GM12878 (cell line): ENCODE measurements at regions of chr1 and their contacts with region 1.

Region 1: GRCh38 chr1:11248155-11248554 is 14.2 kb downstream of the MTOR start:
- DNase-seq: no peak
- ATAC-seq: no peak
- H3K4me3 ChIP-seq: no peak overlapping the region
- H3K27ac ChIP-seq: no peak overlapping the region
- H3K4me1 ChIP-seq: no peaks in the 10 kb centered on the region
- H3K27me3 ChIP-seq: no peaks in the 10 kb centered on the region
- CTCF ChIP-seq: 0 out of 6 replicates have a peak, but pooled peaks of 1 of the 3 experiments have one; percentile 11
- EP300 ChIP-seq: no peak
- POLR2A ChIP-seq: no peak
- RAD21 ChIP-seq: no peak

Region 2: DNA sequence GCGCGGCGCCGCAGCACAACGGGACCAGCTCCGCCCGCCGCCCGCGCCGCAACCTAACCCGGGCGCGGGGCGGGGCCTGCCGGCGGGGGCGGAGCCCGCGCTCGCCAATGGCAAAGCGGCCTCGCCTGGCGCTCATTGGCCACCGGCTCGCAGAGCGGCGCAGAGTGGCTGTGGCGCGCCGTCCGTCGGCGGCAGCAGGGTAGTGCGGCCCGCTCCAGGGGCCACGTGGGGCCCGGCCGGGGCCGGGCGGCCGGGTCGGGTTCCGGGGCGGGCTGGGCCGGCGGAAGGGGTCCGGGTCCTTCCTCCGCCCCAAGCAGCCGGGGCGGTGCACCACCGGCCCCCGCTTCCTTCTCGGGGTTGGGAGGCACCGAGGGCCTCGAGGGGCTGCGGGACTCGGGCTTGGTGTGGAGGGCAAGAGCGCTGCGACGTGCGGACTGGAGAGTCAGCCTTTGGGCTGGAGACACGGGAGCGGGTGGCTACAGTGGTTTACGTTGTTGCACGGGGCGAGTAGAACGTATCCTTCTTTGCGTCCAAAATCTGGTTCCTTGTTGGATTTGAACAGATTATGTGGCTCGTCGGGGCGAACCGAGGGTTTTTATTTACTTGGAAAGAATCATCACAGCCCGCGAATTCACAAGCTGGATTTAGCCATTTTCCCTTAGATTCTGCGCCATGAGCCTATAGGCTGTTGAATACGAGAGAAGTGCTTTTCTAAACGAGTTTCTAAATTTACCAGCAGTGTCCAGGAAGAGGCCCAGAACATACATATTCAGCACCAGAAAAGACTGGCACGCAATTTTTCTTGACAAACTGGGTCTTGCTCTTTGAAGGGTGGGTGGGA is 187.9 kb before region 1 on chr1 and contains the start of gene SRM:
- CTCF ChIA-PET with region 1: interaction called, 10 read pairs
- POLR2A ChIA-PET with region 1: no interaction called
- RAD21 ChIA-PET with region 1: no interaction called
- SMC1A ChIA-PET with region 1: no interaction called
- in situ Hi-C with region 1: no loop called
- intact Hi-C with region 1: no loop called
- DNase-seq: peak; percentile 40
- ATAC-seq: peak; percentile 94
- H3K4me3 ChIP-seq: peak within 1 kb of the TSS; percentile 95
- H3K27ac ChIP-seq: peak within 1 kb of the TSS; percentile 85
- H3K4me1 ChIP-seq: peaks cover 26% of the 10 kb centered on the region
- H3K27me3 ChIP-seq: no peaks in the 10 kb centered on the region
- CTCF ChIP-seq: peak in 2 of 3 experiments; percentile 13 to 41; a peak in 1 of 6 replicates
- EP300 ChIP-seq: no peak
- POLR2A ChIP-seq: peak; percentile 82
- RAD21 ChIP-seq: no peak
- polyA plus RNA-seq, gene SRM: 16.7 to 46.6 TPM

Region 3: GRCh38 chr1:11364170-11364569 is 116.0 kb after region 1 on chr1:
- CTCF ChIA-PET with region 1: interaction called, 20 read pairs
- POLR2A ChIA-PET with region 1: no interaction called
- RAD21 ChIA-PET with region 1: no interaction called
- SMC1A ChIA-PET with region 1: no interaction called
- in situ Hi-C with region 1: no loop called
- intact Hi-C with region 1: no loop called
- DNase-seq: no peak
- ATAC-seq: peak; percentile 41; the same call in 1 of the 3 replicates
- H3K4me3 ChIP-seq: no peak overlapping the region
- H3K27ac ChIP-seq: no peak overlapping the region
- H3K4me1 ChIP-seq: no peaks in the 10 kb centered on the region
- H3K27me3 ChIP-seq: no peaks in the 10 kb centered on the region
- CTCF ChIP-seq: peak; percentile 37 to 53 (median 43); a peak in 4 of 6 replicates
- EP300 ChIP-seq: no peak
- POLR2A ChIP-seq: no peak
- RAD21 ChIP-seq: peak; percentile 56

Region 4: GRCh38 chr1:11397151-11397901 is 149.2 kb after region 1 on chr1:
- CTCF ChIA-PET with region 1: no interaction called
- POLR2A ChIA-PET with region 1: no interaction called
- RAD21 ChIA-PET with region 1: no interaction called
- SMC1A ChIA-PET with region 1: no interaction called
- in situ Hi-C with region 1: no loop called
- intact Hi-C with region 1: no loop called
- DNase-seq: no peak
- ATAC-seq: no peak
- H3K4me3 ChIP-seq: no peak overlapping the region
- H3K27ac ChIP-seq: no peak overlapping the region
- H3K4me1 ChIP-seq: no peaks in the 10 kb centered on the region
- H3K27me3 ChIP-seq: peaks cover 0 to 5% of the 10 kb centered on the region in 2 experiments; a peak in 2 of 4 replicates
- CTCF ChIP-seq: no peak
- EP300 ChIP-seq: no peak
- POLR2A ChIP-seq: no peak
- RAD21 ChIP-seq: no peak